Calu3 (cell line): ENCODE measurements at regions of chr6 and their contacts with region 1.

Region 1: DNA sequence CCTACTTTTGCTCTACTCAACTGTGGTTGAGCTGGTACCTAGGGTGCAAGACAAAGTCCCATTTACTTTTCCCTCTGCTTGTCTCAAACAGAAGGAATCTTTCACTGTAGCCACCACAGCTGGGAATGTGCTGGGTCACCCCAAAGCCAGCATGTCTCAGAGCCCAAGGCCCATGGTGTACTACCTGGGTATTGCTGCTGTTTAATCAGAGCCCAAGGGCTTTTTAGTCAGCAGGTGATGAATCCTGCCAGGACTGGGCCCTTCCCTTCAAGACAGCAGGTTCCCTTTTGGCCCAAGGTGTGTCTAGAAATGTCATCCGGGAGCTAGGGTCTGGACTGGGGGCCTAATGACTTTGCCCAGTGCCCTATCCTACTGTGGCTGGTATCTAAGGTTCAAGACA is 249.8 kb downstream of the HDGFL1 start:
- DNase-seq: no peak
- H3K4me3 Mint-ChIP-seq: no peak overlapping the region
- H3K27ac Mint-ChIP-seq: no peak overlapping the region
- H3K4me1 Mint-ChIP-seq: no peaks in the 10 kb centered on the region
- H3K27me3 Mint-ChIP-seq: no peaks in the 10 kb centered on the region
- CTCF ChIP-seq: no peak

Region 2: DNA sequence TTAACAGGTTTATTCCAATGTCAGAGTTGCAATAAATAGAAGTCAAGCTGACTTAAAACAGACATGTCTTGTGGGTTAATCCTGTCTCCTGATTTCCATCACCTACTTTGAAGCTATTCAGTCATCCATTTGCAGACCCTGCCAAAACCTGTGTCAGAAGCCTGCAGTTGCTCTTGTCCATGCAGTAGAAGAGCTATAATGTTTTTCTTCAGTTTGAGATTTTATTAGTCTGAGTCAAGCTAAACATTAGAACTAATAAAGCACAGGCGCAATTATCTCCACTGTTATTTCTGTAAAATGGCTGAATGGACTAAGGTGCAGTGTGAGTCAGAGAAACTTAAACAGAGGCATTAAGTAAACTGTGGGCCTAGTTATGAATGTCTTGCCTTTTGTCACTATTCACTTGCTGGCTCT is 260.9 kb before region 1 on chr6:
- CTCF ChIA-PET with region 1: no interaction called
- intact Hi-C with region 1: no loop called
- DNase-seq: no peak
- H3K4me3 Mint-ChIP-seq: no peak overlapping the region
- H3K27ac Mint-ChIP-seq: no peak overlapping the region
- H3K4me1 Mint-ChIP-seq: no peaks in the 10 kb centered on the region
- H3K27me3 Mint-ChIP-seq: no peaks in the 10 kb centered on the region
- CTCF ChIP-seq: no peak

Region 3: GRCh38 chr6:22765015-22765414 is 54.2 kb before region 1 on chr6:
- CTCF ChIA-PET with region 1: no interaction called
- intact Hi-C with region 1: loop called (anchors 5 kb)
- DNase-seq: no peak
- H3K4me3 Mint-ChIP-seq: no peak overlapping the region
- H3K27ac Mint-ChIP-seq: peak overlapping the region; percentile 64
- H3K4me1 Mint-ChIP-seq: peaks cover 37% of the 10 kb centered on the region
- H3K27me3 Mint-ChIP-seq: no peaks in the 10 kb centered on the region
- CTCF ChIP-seq: no peak

Region 4: GRCh38 chr6:23145801-23146200 is 326.6 kb after region 1 on chr6:
- CTCF ChIA-PET with region 1: no interaction called
- intact Hi-C with region 1: no loop called
- DNase-seq: no peak
- H3K4me3 Mint-ChIP-seq: no peak overlapping the region
- H3K27ac Mint-ChIP-seq: no peak overlapping the region
- H3K4me1 Mint-ChIP-seq: no peaks in the 10 kb centered on the region
- H3K27me3 Mint-ChIP-seq: no peaks in the 10 kb centered on the region
- CTCF ChIP-seq: no peak